ENCODE measurements at regions of chr19 and their contacts with region 1.

Region 1: DNA sequence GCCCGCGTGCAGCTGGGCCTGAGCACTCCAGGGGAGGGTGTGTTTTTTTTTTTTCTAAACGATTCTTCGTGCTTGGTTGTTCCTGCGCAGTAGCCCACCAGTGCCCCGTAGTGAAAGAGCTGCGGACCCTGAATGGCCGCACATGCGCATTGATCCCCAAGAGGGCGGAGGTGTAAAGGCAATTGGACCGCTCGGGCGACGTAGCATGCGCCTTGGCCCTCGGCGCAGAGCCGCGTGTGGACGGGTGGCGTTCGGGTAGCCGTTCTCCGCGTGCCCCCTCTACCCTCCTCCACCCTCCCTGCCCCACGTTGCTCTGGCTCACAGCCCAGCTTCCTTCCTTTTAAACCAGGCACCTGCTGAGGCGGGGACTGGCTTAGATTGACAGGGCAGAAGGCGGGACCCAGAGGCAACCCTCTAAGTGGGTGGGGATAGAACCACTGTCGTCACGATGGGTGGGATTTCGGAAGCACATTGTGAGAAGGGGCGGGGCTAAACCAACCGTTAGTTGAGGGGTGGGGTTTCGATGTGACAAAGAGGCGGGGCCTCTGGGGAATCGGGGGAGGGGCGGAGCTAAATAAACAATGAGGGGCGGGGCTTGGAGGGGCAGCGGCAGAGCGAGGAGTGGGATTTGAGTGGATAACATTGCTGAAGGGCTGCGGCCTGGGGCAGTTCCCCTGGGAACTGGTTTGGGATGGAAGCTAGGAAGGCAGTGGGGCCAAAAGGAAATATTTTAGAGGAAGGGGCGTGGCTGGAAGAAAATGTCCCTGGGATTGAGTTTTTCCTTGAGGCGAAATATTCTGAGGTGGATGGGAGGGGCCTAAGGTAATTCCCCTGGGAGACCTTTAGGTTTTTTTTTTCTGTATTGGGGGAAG is 543 bp upstream of the NUP62 start:
- DNase-seq: peak; percentile 76 to 97 (median 94)
- H3K4me3 ChIP-seq: peak overlapping the region; percentile 72 to 100 (median 96)
- H3K27ac ChIP-seq: peak overlapping the region; percentile 80 to 99 (median 96)
- H3K27me3 ChIP-seq: no peaks in the 10 kb centered on the region
- CTCF ChIP-seq: peak in 12 of 56 donors; percentile 6 to 35 (median 20)

Region 2: GRCh38 chr19:49877020-49877878 is 52.6 kb before region 1 on chr19 and contains the starts of genes AKT1S1 and TBC1D17:
- intact Hi-C with region 1: loop called (anchors 1 to 2 kb)
- DNase-seq: peak; percentile 98 to 100 (median 99)
- H3K4me3 ChIP-seq: peak within 1 kb of the TSS; percentile 71 to 100 (median 96)
- H3K27ac ChIP-seq: peak within 1 kb of the TSS; percentile 93 to 100 (median 100)
- H3K27me3 ChIP-seq: no peaks in the 10 kb centered on the region
- CTCF ChIP-seq: peak in 4 of 56 donors; percentile 6 to 13 (median 11)
- total RNA-seq, gene AKT1S1: 19.9 to 42.2 (median 27.8) TPM
- total RNA-seq, gene TBC1D17: 61.4 to 116 (median 85.9) TPM

Region 3: DNA sequence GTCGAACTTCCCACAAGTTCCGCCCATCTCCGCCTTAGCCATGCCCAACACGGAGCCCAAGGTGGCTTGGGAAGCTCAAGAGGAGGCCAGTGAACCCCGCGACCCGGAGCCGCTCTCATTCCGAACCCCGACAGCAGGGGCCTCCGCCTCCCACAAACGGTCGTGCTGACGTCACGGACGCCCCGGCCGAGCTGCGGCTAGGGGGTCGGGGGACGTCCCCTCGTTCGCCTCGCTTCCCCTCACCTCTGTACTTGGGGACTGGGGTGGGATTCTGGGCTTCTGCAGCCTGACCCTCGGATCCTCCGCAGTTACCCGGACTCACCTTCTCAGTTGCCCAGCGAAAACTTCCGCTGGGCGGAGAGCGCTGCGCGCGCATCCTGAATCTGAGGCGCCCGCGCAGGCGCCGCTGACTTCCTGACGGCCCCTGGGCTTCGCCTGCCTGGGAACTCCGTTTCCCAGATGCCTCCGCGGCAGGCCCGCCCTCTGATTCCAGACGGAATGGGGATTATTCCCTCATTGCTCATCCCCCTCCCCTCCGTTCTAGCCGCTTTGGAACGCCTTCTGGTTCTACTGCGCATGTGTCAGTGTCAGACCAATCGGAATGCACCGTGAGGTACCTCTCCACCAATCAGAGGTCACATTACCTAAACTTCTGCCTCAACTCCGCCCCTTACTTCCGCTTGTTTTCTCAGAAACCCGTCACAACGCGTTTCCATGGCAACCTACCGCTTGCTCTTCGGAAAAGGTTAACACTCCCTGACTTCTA is 95.4 kb after region 1 on chr19 and contains the start of gene VRK3:
- intact Hi-C with region 1: loop called in 1 of 2 experiments (anchors 10 kb)
- DNase-seq: peak; percentile 99 to 100 (median 99)
- H3K4me3 ChIP-seq: peak within 1 kb of the TSS; percentile 61 to 100 (median 96)
- H3K27ac ChIP-seq: peak within 1 kb of the TSS; percentile 24 to 97 (median 88)
- H3K27me3 ChIP-seq: no peaks in the 10 kb centered on the region
- CTCF ChIP-seq: peak in 37 of 56 donors; percentile 4 to 47 (median 25)
- total RNA-seq, gene VRK3: 38.8 to 67.5 (median 53.3) TPM

Region 4: DNA sequence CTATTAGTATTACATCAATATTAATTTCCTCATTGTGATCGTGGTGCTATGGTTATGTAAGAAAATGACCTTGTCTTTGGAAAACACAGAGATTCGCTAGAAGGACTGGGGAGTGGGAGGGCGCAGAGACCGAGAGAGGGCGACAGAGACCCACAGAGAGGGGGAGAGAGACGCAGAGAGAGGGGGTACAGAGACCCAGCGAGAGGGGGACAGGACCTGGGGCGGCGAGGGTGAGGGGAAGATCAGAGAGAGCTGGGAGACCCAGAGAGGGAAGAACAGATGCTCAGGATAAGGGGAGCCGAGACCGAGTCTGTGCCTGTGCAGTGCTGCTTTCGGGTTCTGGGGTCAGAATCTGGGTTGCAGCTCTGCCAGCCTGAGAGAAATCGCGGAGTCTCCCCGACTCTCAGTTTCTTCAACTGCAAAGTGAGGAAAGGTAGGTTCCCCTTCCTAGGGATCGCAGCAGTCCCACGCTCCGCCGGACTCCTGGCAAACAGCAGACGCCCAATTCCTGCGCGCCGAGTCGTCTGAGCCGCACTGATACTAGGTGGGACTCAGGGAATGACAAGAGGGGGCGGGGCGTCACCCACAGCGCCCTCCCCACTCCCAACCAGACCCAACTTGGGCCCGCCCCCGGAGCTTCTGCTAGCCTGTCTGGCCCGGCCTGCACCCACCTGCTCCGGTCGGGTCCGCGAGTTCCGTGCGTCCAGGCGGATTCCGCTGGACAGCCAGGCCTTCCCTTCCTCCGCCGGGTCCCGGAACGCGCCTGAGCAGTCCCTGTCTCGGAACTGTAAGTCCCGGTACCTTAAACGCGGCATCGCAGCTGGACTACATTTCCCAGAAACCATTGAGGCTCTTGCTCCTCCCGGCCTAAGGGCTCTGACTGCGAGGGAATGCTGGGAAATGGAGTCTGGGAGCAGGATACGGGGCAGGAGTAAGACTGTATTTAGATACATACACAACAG is 217.9 kb after region 1 on chr19:
- intact Hi-C with region 1: loop called in 1 of 2 experiments (anchors 10 kb)
- DNase-seq: peak; percentile 75 to 96 (median 90)
- H3K4me3 ChIP-seq: peak overlapping the region; percentile 56 to 100 (median 77)
- H3K27ac ChIP-seq: peak overlapping the region; percentile 23 to 96 (median 84)
- H3K27me3 ChIP-seq: no peaks in the 10 kb centered on the region
- CTCF ChIP-seq: peak in 54 of 56 donors; percentile 19 to 70 (median 50)

Region 5: DNA sequence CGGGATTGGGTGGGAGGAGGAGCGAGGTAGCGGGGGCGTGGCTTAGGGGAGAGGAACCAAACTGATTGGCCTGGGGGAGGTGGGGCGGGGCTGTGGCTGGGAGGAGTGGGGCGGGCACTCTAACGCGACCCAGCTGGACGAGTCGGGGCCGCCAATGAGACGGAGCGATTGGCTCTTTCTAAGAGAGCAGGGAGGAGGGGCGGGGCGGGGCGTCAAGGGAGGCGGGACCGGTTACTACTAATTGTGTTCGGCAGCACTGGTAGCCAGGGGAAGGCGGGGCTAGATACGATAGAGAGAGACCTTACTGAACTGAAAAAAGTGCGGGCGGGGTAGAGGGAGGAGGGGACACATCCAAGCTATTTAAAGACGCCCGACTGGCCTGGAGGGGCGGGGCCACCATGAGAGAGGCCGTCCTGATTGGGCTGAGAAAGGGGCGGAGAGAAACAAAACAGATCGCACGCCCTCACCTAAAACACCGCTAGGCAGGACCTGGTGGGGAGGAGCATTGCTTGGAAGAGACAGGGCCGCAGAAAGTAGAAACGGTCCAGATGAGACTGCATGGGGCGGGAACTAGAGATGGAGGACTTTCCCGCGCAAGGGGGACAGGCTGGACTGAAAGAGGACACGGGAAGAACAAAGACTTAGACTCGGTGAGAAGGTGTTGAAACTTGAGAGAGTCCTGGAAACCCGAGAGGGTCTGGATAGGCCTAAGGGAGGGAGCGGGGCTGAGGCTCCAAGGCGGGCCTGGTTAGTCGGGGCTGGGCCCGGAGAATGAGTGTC is 399.5 kb after region 1 on chr19 and contains the start of gene KCNC3:
- intact Hi-C with region 1: loop called in 1 of 2 experiments (anchors 5 kb)
- DNase-seq: peak; percentile 97 to 100 (median 100)
- H3K4me3 ChIP-seq: peak within 1 kb of the TSS; percentile 39 to 84 (median 58)
- H3K27ac ChIP-seq: peak within 1 kb of the TSS in 58 of 59 donors; percentile 38 to 93 (median 82)
- H3K27me3 ChIP-seq: no peaks in the 10 kb centered on the region
- CTCF ChIP-seq: peak in 17 of 56 donors; percentile 5 to 50 (median 20)
- total RNA-seq, gene KCNC3: 15.1 to 99.8 (median 56.4) TPM

Measured in dorsolateral prefrontal cortex (tissue), 120 donors.